A673 (cell line): ENCODE measurements at regions of chr5 and their contacts with region 1.

Region 1: GRCh38 chr5:76319673-76320072 is 83.4 kb upstream of the IQGAP2 start:
- DNase-seq: no peak
- H3K4me3 ChIP-seq: no peak overlapping the region
- H3K27ac ChIP-seq: no peak overlapping the region
- H3K4me1 ChIP-seq: no peaks in the 10 kb centered on the region
- H3K27me3 ChIP-seq: no peaks in the 10 kb centered on the region
- CTCF ChIP-seq: no peak

Region 2: GRCh38 chr5:76303921-76304320 is 15.8 kb before region 1 on chr5:
- CTCF ChIA-PET with region 1: no interaction called
- POLR2A ChIA-PET with region 1: interaction called, 13 read pairs
- intact Hi-C with region 1: no loop called
- DNase-seq: peak; percentile 21
- H3K4me3 ChIP-seq: no peak overlapping the region
- H3K27ac ChIP-seq: no peak overlapping the region
- H3K4me1 ChIP-seq: peaks cover 21% of the 10 kb centered on the region
- H3K27me3 ChIP-seq: no peaks in the 10 kb centered on the region
- CTCF ChIP-seq: no peak

Region 3: GRCh38 chr5:76363352-76364225 is 43.9 kb after region 1 on chr5:
- CTCF ChIA-PET with region 1: no interaction called
- POLR2A ChIA-PET with region 1: no interaction called
- intact Hi-C with region 1: no loop called
- DNase-seq: peak; percentile 71
- H3K4me3 ChIP-seq: no peak overlapping the region
- H3K27ac ChIP-seq: no peak overlapping the region
- H3K4me1 ChIP-seq: peaks cover 9% of the 10 kb centered on the region
- H3K27me3 ChIP-seq: no peaks in the 10 kb centered on the region
- CTCF ChIP-seq: no peak

Region 4: DNA sequence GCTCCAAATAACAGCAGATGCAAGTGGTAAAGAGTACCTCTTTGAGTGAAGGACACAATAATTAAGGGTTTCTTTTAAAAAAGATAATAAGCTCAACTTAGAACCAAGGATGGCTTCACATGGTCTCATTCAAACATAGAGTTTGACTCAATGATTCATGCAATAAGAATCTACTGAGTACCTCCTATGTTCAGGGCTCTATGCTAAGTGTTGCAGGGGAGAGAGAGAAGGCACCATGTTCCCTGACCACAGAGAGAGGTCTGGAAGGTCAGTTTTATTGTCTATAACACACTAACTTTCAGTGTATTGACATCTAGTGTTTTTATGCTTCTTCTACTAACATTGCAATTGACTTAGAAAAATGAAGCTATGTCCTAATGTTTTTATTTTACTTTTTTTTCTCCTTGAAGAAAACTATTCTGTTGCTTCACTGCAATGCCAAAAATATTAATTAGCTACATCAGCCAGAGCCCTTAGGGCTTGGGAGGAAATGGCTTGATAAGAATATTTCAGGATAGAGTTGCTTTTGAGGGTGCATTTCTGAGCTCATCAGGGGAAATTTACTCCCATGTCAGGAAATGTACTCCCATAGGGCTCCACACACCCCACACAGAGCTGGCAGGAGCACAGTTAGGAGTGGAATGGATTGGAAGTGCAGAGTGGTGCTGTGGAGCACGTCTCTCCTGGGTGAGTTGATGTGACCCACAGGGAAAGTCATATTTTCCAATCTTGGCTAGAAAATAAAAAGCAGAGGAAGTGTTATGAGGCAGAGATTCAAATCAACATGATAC is 997.4 kb after region 1 on chr5:
- CTCF ChIA-PET with region 1: no interaction called
- POLR2A ChIA-PET with region 1: no interaction called
- intact Hi-C with region 1: no loop called
- DNase-seq: no peak
- H3K4me3 ChIP-seq: no peak overlapping the region
- H3K27ac ChIP-seq: no peak overlapping the region
- H3K4me1 ChIP-seq: no peaks in the 10 kb centered on the region
- H3K27me3 ChIP-seq: no peaks in the 10 kb centered on the region
- CTCF ChIP-seq: no peak